ENCODE measurements at regions of chr4 and their contacts with region 1.

Region 1: DNA sequence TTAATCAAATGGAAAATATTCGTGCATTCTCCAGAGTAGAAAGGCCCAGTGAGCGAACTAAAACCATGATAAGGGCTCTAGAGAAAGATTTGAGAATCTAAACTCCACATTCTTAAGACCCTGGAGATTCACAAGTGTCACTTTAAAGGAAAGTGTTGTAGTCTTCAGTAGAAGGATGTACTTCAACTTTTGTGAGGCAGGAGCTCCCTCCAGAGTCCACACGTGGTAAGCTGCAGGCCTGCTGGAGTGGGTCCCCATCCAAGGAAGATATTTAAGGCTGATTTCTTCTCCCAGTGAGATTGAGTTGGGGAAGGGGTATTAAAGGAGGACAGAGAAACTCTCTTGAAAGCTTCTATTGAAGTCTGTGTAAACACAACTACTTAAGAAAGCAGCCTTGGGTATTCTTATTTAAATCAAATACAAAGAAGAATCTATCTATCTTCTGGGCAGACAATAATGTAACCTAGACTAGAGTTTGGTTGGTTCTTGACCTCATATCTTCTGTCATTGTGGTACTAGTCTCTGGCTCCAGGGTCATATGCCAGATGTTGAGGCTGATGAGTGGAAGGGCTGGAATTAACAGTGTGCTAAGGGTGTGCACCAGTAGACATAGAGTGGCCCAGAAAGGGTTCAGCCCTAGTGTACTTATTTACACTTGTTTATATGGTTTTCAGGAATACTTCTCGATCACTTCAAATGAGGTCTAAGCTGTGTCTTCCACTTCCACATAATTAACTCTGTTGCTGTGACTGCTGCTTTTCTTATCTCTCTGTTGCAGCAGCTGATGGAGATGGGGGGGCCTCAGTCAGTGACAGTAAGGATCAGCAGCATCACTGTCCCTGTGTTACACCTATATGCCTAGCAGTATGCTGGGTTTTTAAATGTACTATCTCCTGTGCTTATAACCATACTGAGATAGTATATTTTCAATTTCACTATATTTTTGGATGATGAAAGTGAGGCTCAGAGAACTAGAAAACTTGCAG is 76.1 kb downstream of the HMGB2 start:
- DNase-seq: peak; percentile 52 to 83 (median 71)
- ATAC-seq: peak; percentile 93
- H3K4me3 ChIP-seq: no peak overlapping the region
- H3K27ac ChIP-seq: no peak overlapping the region
- H3K4me1 ChIP-seq: no peaks in the 10 kb centered on the region
- H3K27me3 ChIP-seq: no peaks in the 10 kb centered on the region

Region 2: DNA sequence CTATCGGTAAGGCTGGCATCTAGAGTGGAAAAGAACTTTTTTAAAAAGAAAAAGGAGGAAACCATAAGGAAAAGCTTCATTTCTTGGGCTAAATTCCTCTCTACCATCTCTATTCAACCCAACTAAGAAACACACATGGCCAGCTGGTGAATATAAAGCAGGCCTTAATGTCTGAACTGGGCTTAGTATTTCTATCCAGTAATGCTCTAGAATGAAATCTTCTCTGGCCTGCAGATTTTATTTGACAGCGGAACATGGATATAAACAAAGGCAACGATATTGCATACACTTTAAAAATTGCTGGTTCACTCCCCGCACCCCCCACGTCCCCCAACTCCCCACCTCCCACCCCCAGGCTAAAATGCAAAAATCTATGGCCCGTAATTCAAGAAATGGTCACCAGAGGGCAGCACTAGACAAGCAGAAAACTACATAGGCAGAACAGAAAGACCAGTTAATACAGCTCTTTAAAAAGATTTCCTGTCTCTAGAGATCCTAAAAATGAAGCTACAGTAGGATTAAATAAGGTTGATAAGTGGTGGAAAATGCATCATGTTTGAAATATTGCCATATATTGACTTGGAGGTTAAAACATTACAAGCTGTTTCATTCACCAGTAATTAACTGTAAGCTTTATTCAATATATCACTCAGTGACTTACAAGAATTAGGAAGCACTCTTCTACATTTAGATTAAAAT is 244.6 kb before region 1 on chr4:
- intact Hi-C with region 1: loop called in 2 of 4 experiments (anchors 5 kb)
- DNase-seq: no peak
- ATAC-seq: peak; percentile 56 to 63
- H3K4me3 ChIP-seq: no peak overlapping the region
- H3K27ac ChIP-seq: no peak overlapping the region
- H3K4me1 ChIP-seq: no peaks in the 10 kb centered on the region
- H3K27me3 ChIP-seq: no peaks in the 10 kb centered on the region

Region 3: GRCh38 chr4:173139561-173139960 is 118.5 kb before region 1 on chr4:
- intact Hi-C with region 1: no loop called
- DNase-seq: no peak
- ATAC-seq: no peak
- H3K4me3 ChIP-seq: no peak overlapping the region
- H3K27ac ChIP-seq: no peak overlapping the region
- H3K4me1 ChIP-seq: no peaks in the 10 kb centered on the region
- H3K27me3 ChIP-seq: no peaks in the 10 kb centered on the region

Region 4: GRCh38 chr4:173168396-173169177 is 89.4 kb before region 1 on chr4 and contains the start of gene GALNT7:
- intact Hi-C with region 1: no loop called
- DNase-seq: peak; percentile 67 to 85 (median 85)
- ATAC-seq: peak; percentile 80 to 84
- H3K4me3 ChIP-seq: peak within 1 kb of the TSS; percentile 99
- H3K27ac ChIP-seq: peak within 1 kb of the TSS; percentile 85
- H3K4me1 ChIP-seq: no peaks in the 10 kb centered on the region
- H3K27me3 ChIP-seq: no peaks in the 10 kb centered on the region
- total RNA-seq, gene GALNT7: 7.0 to 11.0 (median 8.4) TPM